Activated B cell treated with CpG ODN at 0.5 μM for 24 hours (primary cell): ENCODE measurements at regions of chr12 and their contacts with region 1.

Region 1: GRCh38 chr12:24919346-24920001 is 29.4 kb downstream of the BCAT1 start:
- DNase-seq: no peak
- ATAC-seq: peak; percentile 70
- H3K4me3 Mint-ChIP-seq: no peak overlapping the region
- H3K27ac Mint-ChIP-seq: peak overlapping the region; percentile 24
- H3K4me1 Mint-ChIP-seq: peaks cover 30% of the 10 kb centered on the region
- H3K27me3 Mint-ChIP-seq: no peaks in the 10 kb centered on the region
- CTCF ChIP-seq: no peak

Region 2: DNA sequence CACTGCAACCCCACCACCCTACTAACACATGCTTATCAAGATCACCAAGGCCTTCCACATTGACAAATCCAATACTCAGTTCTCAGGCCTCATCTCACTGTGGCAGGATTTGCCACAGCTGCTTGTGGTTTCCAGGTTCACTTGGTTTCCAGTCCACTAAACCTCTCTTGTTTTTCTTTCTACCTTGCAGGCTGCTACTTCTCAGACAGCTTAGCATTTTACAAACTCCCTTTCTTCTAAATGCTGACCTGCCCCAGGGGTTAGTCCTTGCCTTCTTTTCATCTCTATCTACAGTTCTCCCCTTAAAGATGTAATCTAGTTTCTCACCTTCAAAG is 54.7 kb before region 1 on chr12:
- CTCF ChIA-PET with region 1: no interaction called
- POLR2A ChIA-PET with region 1: no interaction called
- intact Hi-C with region 1: no loop called
- DNase-seq: no peak
- ATAC-seq: no peak
- H3K4me3 Mint-ChIP-seq: no peak overlapping the region
- H3K27ac Mint-ChIP-seq: no peak overlapping the region
- H3K4me1 Mint-ChIP-seq: peaks cover 4% of the 10 kb centered on the region
- H3K27me3 Mint-ChIP-seq: no peaks in the 10 kb centered on the region
- CTCF ChIP-seq: no peak

Region 3: GRCh38 chr12:24902511-24903328 is 16.8 kb before region 1 on chr12:
- CTCF ChIA-PET with region 1: no interaction called
- POLR2A ChIA-PET with region 1: no interaction called
- intact Hi-C with region 1: loop called (anchors 2 kb)
- DNase-seq: peak; percentile 26
- ATAC-seq: peak; percentile 40
- H3K4me3 Mint-ChIP-seq: peak overlapping the region; percentile 89
- H3K27ac Mint-ChIP-seq: no peak overlapping the region
- H3K4me1 Mint-ChIP-seq: peaks cover 23% of the 10 kb centered on the region
- H3K27me3 Mint-ChIP-seq: peaks cover 19% of the 10 kb centered on the region
- CTCF ChIP-seq: no peak

Region 4: DNA sequence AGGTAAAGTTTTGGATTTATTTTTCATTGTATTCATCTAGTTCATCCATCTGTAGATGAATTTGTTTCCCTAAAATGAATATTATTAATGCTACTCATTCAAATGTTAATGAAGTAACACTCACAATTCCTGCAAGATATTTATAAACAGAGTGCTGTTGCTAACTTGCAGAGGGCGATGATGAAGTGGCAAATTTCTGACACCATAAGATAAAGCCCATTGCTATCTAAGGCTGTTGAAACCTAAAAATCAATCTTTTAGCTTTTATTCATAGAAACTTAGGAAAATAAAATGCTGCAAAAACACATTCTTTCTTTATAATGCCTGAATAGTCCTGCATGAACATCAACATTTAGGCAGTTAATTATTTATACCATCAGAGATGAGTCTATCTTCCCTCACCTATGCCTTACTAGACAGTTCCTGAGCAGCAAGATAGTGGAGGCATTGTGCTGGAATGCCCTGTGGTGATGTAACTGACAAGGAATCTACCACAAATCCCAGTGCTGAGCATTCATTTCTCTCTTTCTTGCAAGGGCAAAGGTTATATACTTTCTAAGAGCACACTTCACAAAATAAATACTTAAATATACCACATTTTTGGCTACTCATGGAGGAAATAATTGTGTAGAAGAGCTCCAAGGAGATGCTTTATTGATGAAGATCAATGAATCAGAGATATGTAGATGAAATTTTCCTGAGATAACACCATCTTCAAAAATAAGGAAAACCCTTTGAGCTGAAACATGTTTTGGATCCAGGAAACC is 576.0 kb after region 1 on chr12:
- CTCF ChIA-PET with region 1: no interaction called
- POLR2A ChIA-PET with region 1: no interaction called
- intact Hi-C with region 1: no loop called
- DNase-seq: no peak
- ATAC-seq: no peak
- H3K4me3 Mint-ChIP-seq: no peak overlapping the region
- H3K27ac Mint-ChIP-seq: no peak overlapping the region
- H3K4me1 Mint-ChIP-seq: no peaks in the 10 kb centered on the region
- H3K27me3 Mint-ChIP-seq: no peaks in the 10 kb centered on the region
- CTCF ChIP-seq: no peak